CD4-positive, alpha-beta memory T cell (primary cell): ENCODE measurements at regions of chr18 and their contacts with region 1.

Region 1: GRCh38 chr18:12391618-12392165 is 14.7 kb upstream of the AFG3L2 start:
- DNase-seq: peak in 4 of 5 donors; percentile 45 to 52 (median 50)
- H3K4me3 ChIP-seq: no peak overlapping the region
- H3K4me3 Mint-ChIP-seq: no peak overlapping the region
- H3K27ac ChIP-seq: no peak overlapping the region
- H3K27ac Mint-ChIP-seq: no peak overlapping the region
- H3K4me1 ChIP-seq: no peaks in the 10 kb centered on the region
- H3K4me1 Mint-ChIP-seq: no peaks in the 10 kb centered on the region
- H3K27me3 ChIP-seq: no peaks in the 10 kb centered on the region
- H3K27me3 Mint-ChIP-seq: peaks cover 5 to 12% of the 10 kb centered on the region in 2 donors

Region 2: DNA sequence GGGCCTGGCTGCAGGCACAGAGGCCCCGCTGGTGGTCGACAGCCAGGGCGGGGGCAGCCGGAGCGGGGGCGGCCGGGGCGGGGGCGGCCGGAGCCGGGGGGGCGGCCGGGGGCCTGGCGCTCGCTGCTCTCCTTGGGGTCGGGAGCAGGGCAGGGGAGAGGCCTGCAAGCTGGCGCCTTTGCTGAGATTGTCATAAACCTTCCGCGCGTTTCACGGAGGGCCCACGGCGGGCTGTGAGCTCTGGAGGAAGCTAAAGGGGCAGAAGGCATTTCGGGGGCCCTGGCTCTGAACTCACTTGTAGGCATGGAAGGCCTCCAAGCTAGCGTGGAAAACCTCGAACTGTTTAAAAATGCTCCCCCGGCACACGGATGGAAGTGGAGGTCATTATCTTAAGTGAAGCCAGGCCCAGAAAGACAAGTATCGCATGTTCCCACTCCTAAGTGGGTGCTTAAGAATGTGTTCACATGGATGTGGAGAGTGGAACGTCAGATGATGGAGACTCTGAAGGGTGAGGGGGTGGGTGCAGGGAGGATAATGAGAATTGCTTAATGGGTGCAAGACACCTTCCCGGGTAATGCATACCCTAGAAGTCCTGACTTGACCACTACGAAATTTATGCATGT is 16.7 kb after region 1 on chr18:
- CTCF ChIA-PET with region 1: interaction called, 26 read pairs
- POLR2A ChIA-PET with region 1: no interaction called
- intact Hi-C with region 1: no loop called
- DNase-seq: peak in 1 of 5 donors; percentile 6
- H3K4me3 ChIP-seq: no peak overlapping the region
- H3K4me3 Mint-ChIP-seq: peak overlapping the region; percentile 58 to 75 (median 68)
- H3K27ac ChIP-seq: no peak overlapping the region
- H3K27ac Mint-ChIP-seq: peak overlapping the region in 3 of 7 donors; percentile 31 to 79 (median 35)
- H3K4me1 ChIP-seq: peaks cover 18% of the 10 kb centered on the region
- H3K4me1 Mint-ChIP-seq: peaks cover 12 to 38% (median 19%) of the 10 kb centered on the region in 4 donors
- H3K27me3 ChIP-seq: no peaks in the 10 kb centered on the region
- H3K27me3 Mint-ChIP-seq: peaks cover 11 to 15% of the 10 kb centered on the region in 2 donors

Region 3: DNA sequence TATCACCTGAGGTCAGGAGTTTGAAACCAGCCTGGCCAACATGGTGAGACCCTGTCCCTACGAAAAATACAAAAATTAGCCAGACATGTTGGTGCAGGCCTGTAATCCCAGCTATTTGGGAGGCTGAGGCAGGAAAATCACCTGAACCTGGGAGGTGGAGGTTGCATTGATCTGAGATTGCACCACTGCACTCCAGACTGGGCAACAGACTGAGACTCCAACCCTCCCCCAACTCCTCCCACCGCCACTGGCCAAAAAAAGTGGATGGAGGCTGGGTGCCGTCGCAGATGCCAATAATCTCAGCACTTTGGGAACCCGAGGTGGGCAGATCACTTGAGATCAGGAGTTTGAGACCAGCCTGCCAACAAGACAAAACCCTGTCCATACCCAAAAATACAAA is 276.3 kb after region 1 on chr18:
- CTCF ChIA-PET with region 1: interaction called, 57 read pairs
- POLR2A ChIA-PET with region 1: no interaction called
- intact Hi-C with region 1: no loop called
- DNase-seq: no peak
- H3K4me3 ChIP-seq: no peak overlapping the region
- H3K4me3 Mint-ChIP-seq: no peak overlapping the region
- H3K27ac ChIP-seq: no peak overlapping the region
- H3K27ac Mint-ChIP-seq: no peak overlapping the region
- H3K4me1 ChIP-seq: no peaks in the 10 kb centered on the region
- H3K4me1 Mint-ChIP-seq: peaks cover 0 to 2% (median 0%) of the 10 kb centered on the region in 4 donors
- H3K27me3 ChIP-seq: no peaks in the 10 kb centered on the region
- H3K27me3 Mint-ChIP-seq: no peaks in the 10 kb centered on the region

Region 4: GRCh38 chr18:12726774-12727550 is 335.3 kb after region 1 on chr18:
- CTCF ChIA-PET with region 1: interaction called, 3 read pairs
- POLR2A ChIA-PET with region 1: no interaction called
- intact Hi-C with region 1: loop called (anchors 5 kb)
- DNase-seq: peak; percentile 55 to 68 (median 62)
- H3K4me3 ChIP-seq: no peak overlapping the region
- H3K4me3 Mint-ChIP-seq: no peak overlapping the region
- H3K27ac ChIP-seq: no peak overlapping the region
- H3K27ac Mint-ChIP-seq: peak overlapping the region in 2 of 7 donors; percentile 9 to 82
- H3K4me1 ChIP-seq: no peaks in the 10 kb centered on the region
- H3K4me1 Mint-ChIP-seq: peaks cover 0 to 5% (median 1%) of the 10 kb centered on the region in 4 donors
- H3K27me3 ChIP-seq: no peaks in the 10 kb centered on the region
- H3K27me3 Mint-ChIP-seq: no peaks in the 10 kb centered on the region

Region 5: GRCh38 chr18:13982136-13982535 is 1590.4 kb after region 1 on chr18:
- CTCF ChIA-PET with region 1: no interaction called
- POLR2A ChIA-PET with region 1: no interaction called
- intact Hi-C with region 1: no loop called
- DNase-seq: no peak
- H3K4me3 ChIP-seq: no peak overlapping the region
- H3K4me3 Mint-ChIP-seq: no peak overlapping the region
- H3K27ac ChIP-seq: no peak overlapping the region
- H3K27ac Mint-ChIP-seq: no peak overlapping the region
- H3K4me1 ChIP-seq: no peaks in the 10 kb centered on the region
- H3K4me1 Mint-ChIP-seq: no peaks in the 10 kb centered on the region
- H3K27me3 ChIP-seq: no peaks in the 10 kb centered on the region
- H3K27me3 Mint-ChIP-seq: peaks cover 5 to 14% of the 10 kb centered on the region in 2 donors